ENCODE measurements at regions of chr15 and their contacts with region 1.

Region 1: GRCh38 chr15:51155891-51156290 is 61.2 kb upstream of the TNFAIP8L3 start:
- DNase-seq: no peak
- H3K4me3 ChIP-seq: no peak overlapping the region
- CTCF ChIP-seq: no peak
- POLR2A ChIP-seq: no peak

Region 2: DNA sequence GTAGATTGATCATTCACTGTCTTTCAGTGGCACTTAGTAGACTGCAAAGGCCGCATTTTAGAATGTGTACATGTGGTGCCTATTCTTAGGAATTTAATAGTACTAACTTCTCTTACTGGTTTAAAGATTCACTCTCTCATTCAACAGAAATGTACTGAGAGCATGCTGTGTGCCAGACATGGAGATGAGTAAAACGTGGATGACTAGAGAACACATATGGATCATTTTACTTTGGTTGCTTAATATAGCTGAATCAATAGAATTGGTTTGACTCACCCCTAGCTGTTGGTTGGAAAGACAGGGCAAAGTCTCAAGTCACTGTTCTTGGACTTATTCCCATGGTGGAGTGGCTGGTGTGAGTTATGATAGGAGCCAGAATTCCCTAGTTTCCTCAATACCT is 47.9 kb after region 1 on chr15:
- intact Hi-C with region 1: loop called (anchors 10 kb)
- DNase-seq: no peak
- H3K4me3 ChIP-seq: no peak overlapping the region
- CTCF ChIP-seq: no peak
- POLR2A ChIP-seq: no peak

Region 3: DNA sequence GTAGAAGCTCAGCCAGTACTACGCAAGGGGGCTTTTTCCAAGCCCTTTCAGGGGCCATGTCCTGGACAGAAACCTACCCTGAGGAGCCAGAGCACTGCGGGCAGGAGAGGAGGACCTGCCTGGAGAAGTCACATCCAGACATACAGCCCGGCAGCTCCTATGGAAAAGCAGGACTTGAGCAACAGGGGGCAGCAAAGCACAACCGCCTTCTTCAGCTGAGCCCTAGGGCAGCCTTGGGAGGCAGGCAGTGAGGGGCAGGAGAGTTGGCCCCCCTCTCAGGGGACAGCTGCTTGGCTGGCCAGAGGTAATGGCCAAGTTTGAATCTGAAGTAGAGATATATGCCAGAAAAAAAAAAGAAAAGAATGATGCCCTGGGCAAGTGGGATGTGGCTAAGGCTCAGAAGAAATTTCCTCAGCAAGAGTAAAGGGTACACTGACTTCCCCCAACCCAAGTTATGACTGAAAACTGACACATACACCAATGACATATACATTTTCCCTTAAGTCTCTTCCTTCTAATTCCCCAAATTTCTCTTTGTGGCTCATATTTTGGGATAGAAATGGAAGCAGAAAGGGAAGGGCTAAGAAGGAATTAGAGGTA is 125.6 kb after region 1 on chr15:
- intact Hi-C with region 1: no loop called
- DNase-seq: peak; percentile 45 to 90
- H3K4me3 ChIP-seq: no peak overlapping the region
- CTCF ChIP-seq: no peak
- POLR2A ChIP-seq: no peak

Measured in lower leg skin (tissue), 4 donors.